Cardiac septum (tissue), 1 donor: ENCODE measurements at regions of chr1 and their contacts with region 1.

Region 1: GRCh38 chr1:22673486-22674409 is 20.7 kb downstream of the C1QB start:
- DNase-seq: no peak

Region 2: DNA sequence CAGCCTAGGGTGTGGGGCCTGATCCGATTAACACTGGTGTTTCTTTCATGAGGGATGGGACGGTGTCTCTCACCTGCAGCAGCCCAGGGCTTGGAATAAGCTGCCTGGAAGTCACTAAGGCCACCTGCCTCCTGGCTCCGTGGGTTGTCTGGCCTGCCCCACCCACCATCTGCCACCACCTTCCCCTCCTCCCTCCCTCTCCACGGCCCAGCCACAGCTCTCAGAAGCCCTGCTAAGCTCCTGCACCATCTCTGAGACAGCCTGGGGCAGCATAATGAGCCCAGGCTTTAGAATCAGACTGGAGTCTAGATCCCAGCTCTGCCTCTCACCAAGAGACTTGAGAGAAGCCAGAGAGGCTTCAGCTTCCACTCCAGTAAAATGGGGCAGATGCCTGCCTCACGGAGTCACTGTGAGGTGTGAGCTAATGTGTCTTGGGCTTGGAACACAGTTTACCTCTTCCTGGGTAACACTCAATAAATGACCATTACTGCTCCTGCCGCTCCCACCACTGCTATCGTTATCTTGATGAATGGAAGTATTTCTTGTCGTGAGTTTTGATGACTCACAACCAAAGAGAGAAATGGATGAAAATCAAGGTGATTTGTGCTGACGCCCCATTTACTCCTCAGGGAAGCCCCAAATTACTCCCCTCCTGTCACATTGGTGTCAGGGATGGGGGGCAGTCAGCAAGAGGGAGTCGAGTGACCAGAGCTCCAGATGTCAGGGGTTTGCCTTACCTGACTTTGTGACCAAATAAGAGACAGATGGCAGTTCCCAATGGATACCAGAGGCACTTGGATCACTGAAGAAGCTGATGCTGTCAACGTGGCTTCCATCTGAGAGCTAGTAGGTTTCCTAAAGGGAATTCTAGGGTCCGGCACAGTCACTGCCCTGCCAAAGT is 60.8 kb before region 1 on chr1:
- intact Hi-C with region 1: no loop called
- DNase-seq: no peak

Region 3: DNA sequence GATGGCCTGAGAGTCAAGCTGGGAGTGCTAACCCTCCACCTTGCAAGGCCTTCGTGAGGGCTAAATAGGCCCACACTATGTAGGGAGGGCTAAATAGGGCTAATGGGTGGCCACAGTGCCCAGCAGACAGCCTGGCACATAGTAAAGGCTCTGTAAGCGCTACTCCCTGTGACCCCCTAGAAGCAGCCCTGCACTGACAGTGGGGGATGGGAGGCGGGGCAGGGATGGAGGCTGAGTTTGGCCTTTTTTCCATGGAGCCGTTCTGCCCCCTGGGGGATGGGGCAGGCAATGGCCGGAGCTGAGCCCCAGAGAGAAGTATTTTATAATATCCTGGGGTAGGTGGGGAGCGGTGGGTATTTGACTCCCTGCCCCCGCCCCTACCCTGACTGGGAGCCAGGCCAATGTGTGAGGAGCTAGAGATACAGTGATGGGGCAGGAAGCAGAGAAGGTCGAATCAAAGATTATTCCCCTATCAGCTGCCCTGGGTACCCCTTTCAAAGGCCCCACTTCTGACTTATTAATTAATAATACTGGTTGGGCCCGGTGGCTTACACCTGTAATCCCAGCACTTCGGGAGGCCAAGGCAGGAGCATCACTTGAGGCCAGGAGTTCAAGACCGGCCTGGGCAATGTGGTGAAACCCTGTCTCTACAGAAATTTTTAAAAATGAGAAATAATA is 256.6 kb after region 1 on chr1:
- intact Hi-C with region 1: loop called (anchors 2 kb)
- DNase-seq: no peak